Activated B cell treated with CpG ODN at 0.5 μM for 24 hours (primary cell): ENCODE measurements at regions of chrX and their contacts with region 1.

Region 1: GRCh38 chrX:69093960-69094871 is 71.0 kb downstream of the PJA1 start:
- DNase-seq: no peak
- ATAC-seq: no peak
- H3K4me3 Mint-ChIP-seq: no peak overlapping the region
- H3K27ac Mint-ChIP-seq: no peak overlapping the region
- H3K4me1 Mint-ChIP-seq: no peaks in the 10 kb centered on the region
- H3K27me3 Mint-ChIP-seq: no peaks in the 10 kb centered on the region
- CTCF ChIP-seq: no peak

Region 2: DNA sequence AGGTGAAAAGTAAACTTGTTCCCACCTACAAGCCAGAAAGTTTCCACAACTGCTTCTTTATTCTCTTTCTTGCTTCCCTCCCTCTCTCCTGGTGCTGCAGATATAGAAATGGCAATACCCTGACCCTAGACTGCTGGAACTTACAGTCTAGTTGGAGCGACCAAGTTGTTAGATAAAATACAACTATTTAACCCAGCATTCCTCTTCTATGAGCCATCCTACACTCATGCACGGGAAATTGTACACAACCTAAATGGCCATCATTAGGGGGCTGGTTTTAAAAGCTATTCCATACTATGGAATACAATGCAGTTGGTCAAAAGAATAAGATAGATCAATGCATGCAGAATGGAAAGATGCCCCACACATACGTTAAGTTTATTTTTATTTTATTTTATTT is 29.9 kb after region 1 on chrX:
- CTCF ChIA-PET with region 1: no interaction called
- POLR2A ChIA-PET with region 1: no interaction called
- intact Hi-C with region 1: no loop called
- DNase-seq: no peak
- ATAC-seq: no peak
- H3K4me3 Mint-ChIP-seq: no peak overlapping the region
- H3K27ac Mint-ChIP-seq: no peak overlapping the region
- H3K4me1 Mint-ChIP-seq: peaks cover 2% of the 10 kb centered on the region
- H3K27me3 Mint-ChIP-seq: peaks cover 3% of the 10 kb centered on the region
- CTCF ChIP-seq: no peak

Region 3: DNA sequence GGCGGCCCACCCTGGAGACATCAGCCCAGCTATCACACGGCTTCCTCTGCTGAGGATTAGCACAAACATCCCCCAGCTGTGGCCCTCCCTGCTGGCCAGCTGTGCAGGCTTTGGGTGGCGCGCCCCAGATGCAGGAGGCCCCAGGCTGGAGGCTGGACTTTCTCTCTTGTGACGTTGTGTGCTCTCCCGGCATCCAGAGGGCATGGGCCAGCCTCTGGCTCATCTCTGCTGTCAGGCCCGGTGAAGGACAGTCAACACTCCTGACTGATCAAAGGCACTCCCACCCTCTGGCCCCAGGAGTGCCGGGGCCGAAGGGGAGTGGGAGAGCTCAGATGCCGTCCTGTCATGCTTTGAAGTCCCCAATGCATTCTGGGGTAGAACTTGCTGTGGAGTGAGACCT is 101.0 kb after region 1 on chrX:
- CTCF ChIA-PET with region 1: no interaction called
- POLR2A ChIA-PET with region 1: no interaction called
- intact Hi-C with region 1: no loop called
- DNase-seq: no peak
- ATAC-seq: no peak
- H3K4me3 Mint-ChIP-seq: no peak overlapping the region
- H3K27ac Mint-ChIP-seq: no peak overlapping the region
- H3K4me1 Mint-ChIP-seq: no peaks in the 10 kb centered on the region
- H3K27me3 Mint-ChIP-seq: no peaks in the 10 kb centered on the region
- CTCF ChIP-seq: no peak

Region 4: DNA sequence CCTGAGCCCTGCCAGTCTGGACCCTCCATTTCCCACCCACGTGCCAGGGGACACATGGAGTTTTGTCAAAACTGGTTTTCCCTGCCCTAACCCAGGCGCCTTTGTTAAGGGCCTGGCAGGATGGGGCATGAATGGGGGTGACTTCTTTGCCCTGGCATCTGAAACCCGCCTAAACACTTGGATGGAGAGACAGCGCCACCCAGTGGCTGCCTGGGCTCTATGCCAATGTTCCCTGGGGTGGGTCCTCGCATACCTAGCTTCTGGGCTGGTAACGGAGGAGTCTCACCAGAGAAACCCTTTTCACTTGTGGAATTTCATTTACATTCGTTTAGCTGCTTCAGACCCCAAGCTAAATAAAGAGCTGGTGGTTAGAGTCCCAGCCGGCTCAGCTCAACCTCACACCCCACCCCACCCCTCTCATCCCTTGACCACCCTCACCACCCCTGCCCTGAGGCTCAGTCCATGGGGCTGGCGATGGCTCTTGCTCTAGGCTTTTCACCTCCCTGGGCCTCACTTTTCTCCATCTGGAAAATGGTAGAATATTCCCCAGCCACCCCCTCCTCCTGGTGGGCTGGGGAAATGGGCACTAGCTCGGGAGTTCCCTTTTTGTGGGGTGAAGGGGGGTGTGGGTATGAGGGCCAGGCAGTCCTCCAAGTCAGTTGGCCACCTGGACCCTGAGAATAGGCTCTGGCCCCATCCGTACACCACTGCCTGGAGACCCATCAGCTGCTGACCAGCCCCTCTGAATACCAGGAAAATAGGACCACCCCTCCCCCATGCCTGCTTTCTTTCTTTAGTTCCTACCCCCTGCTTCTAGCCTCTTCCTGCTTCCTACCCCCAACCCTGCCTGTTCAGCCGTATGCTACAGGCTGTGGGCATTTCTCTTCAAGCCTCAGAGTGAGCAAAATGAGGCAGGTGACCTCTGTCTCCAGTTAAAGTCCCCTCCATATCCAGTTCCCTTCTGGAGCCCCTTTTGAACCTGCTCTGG is 128.2 kb after region 1 on chrX:
- CTCF ChIA-PET with region 1: no interaction called
- POLR2A ChIA-PET with region 1: no interaction called
- intact Hi-C with region 1: loop called (anchors 2 kb)
- DNase-seq: peak; percentile 45
- ATAC-seq: peak; percentile 71
- H3K4me3 Mint-ChIP-seq: no peak overlapping the region
- H3K27ac Mint-ChIP-seq: no peak overlapping the region
- H3K4me1 Mint-ChIP-seq: peaks cover 1% of the 10 kb centered on the region
- H3K27me3 Mint-ChIP-seq: peaks cover 2% of the 10 kb centered on the region
- CTCF ChIP-seq: no peak